ENCODE measurements at regions of chr1 and their contacts with region 1.

Region 1: DNA sequence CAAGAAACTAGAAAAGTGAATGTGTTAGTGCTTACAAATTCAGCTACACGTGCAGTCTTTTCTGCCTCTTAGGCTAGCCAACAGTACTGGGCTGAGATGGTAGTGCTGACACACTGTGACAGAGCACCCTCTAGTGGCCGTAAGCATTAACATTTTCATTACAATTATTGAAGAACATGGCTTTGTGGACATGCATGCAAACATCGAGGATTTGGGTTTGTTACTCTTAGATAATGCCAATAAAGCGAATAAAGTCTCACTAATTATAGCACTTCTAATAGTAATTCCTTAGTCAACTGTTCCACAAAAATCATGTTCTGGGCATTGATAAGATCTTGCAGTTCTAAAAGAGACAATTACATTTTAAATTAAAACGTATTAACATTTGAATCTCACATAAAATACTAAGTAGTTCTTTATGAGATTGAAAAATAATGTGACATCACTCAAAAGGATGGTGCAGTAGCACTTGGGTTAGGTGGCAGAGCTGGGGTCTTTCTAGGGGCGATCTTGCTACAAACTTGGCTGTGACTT is 47.1 kb downstream of the MYSM1 start:
- DNase-seq: peak; percentile 72
- ATAC-seq: peak; percentile 90
- H3K4me3 Mint-ChIP-seq: no peak overlapping the region
- H3K27ac Mint-ChIP-seq: no peak overlapping the region
- H3K4me1 Mint-ChIP-seq: peaks cover 21% of the 10 kb centered on the region
- H3K27me3 Mint-ChIP-seq: no peaks in the 10 kb centered on the region
- CTCF ChIP-seq: peak; percentile 83

Region 2: DNA sequence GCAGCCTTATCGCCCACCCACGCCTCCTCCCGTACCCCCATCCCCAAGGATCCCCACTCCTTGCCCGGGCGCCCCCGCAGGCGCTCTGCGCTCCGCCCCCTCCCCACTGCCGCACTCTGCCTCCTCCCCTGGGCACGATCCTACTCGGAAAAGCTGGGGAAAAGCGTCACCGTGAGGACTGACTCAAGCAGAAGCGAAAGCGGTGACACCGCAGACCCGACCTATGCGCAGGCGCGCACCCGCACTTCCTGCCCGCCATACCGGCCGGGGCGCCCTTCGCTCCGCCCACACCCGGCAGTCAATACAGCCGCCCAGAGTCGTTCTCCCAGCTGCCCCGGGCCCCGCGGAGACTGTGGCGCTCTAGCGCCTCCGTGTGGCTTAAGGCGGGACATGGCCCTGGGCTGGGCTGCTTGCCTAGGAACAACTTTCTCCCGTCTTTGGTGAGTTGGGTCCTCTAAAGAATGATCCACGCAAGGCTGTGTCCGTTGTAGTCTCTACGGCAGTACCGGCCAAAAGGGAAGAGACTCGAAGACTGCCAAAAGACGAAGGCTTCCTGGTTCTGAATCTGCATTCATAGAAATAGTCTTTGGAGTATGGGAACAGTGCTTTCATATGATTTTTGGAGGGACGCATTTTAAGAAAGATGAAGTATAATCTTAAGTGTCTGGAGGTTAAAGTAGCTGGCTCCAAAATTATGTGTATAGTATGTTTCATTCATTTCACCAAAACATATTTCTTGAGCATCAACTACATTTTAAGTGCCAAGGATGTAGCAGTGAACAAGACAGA is 106.0 kb before region 1 on chr1 and contains the start of gene OMA1:
- CTCF ChIA-PET with region 1: interaction called, 17 read pairs
- POLR2A ChIA-PET with region 1: no interaction called
- intact Hi-C with region 1: no loop called
- DNase-seq: peak; percentile 97
- ATAC-seq: peak; percentile 95
- H3K4me3 Mint-ChIP-seq: peak within 1 kb of the TSS; percentile 93
- H3K27ac Mint-ChIP-seq: peak within 1 kb of the TSS; percentile 95
- H3K4me1 Mint-ChIP-seq: peaks cover 18% of the 10 kb centered on the region
- H3K27me3 Mint-ChIP-seq: no peaks in the 10 kb centered on the region
- CTCF ChIP-seq: peak; percentile 78
- total RNA-seq, gene OMA1: 14.7 to 14.9 TPM

Region 3: DNA sequence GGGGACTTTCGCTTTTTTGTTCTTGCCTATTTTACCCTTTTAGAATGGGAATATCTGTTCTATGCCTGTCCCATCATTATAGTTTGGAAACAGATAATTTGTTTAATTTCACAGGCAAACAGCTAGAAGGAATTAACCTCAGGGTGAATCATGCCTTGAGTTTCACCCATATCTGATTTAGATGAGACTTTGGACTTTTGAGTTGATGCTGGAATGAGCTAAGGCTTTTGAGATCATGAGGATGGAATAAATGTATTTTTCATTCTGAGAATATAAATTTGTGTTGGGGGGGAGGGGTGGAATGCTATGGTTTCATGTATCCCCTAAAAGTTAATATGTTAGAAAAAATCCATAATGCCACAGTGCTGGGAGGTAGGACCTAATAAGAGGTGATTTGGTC is 19.6 kb before region 1 on chr1:
- CTCF ChIA-PET with region 1: no interaction called
- POLR2A ChIA-PET with region 1: no interaction called
- intact Hi-C with region 1: no loop called
- DNase-seq: no peak
- ATAC-seq: no peak
- H3K4me3 Mint-ChIP-seq: no peak overlapping the region
- H3K27ac Mint-ChIP-seq: no peak overlapping the region
- H3K4me1 Mint-ChIP-seq: no peaks in the 10 kb centered on the region
- H3K27me3 Mint-ChIP-seq: peaks cover 5% of the 10 kb centered on the region
- CTCF ChIP-seq: no peak

Region 4: GRCh38 chr1:58664881-58665280 is 12.2 kb after region 1 on chr1:
- CTCF ChIA-PET with region 1: interaction called, 43 read pairs
- POLR2A ChIA-PET with region 1: no interaction called
- intact Hi-C with region 1: no loop called
- DNase-seq: no peak
- ATAC-seq: no peak
- H3K4me3 Mint-ChIP-seq: no peak overlapping the region
- H3K27ac Mint-ChIP-seq: no peak overlapping the region
- H3K4me1 Mint-ChIP-seq: no peaks in the 10 kb centered on the region
- H3K27me3 Mint-ChIP-seq: no peaks in the 10 kb centered on the region
- CTCF ChIP-seq: no peak

Region 5: GRCh38 chr1:58683519-58683918 is 30.8 kb after region 1 on chr1:
- CTCF ChIA-PET with region 1: interaction called, 11 read pairs
- POLR2A ChIA-PET with region 1: no interaction called
- intact Hi-C with region 1: no loop called
- DNase-seq: no peak
- ATAC-seq: no peak
- H3K4me3 Mint-ChIP-seq: no peak overlapping the region
- H3K27ac Mint-ChIP-seq: no peak overlapping the region
- H3K4me1 Mint-ChIP-seq: peaks cover 31% of the 10 kb centered on the region
- H3K27me3 Mint-ChIP-seq: no peaks in the 10 kb centered on the region
- CTCF ChIP-seq: no peak

Region 6: DNA sequence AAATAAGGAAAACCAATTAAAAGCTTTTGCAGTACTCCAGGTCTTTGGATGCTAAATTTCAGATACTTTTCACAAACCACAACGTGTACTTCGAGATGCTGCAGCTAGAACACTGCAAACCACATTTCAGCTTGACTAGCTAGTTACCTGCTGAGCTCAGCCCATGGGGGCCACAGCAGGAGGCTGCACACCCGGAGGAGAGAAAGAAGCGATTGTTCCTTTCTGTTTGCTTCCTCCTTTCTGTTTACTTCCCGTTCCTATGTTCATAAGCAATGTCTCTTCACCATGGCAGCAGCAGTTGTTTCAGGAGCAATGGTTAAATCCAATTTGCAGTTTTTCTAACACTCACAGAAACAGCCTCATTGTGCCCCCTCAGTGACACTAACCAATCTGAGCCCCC is 418.6 kb after region 1 on chr1:
- CTCF ChIA-PET with region 1: no interaction called
- POLR2A ChIA-PET with region 1: no interaction called
- intact Hi-C with region 1: no loop called
- DNase-seq: peak; percentile 22
- ATAC-seq: peak; percentile 55
- H3K4me3 Mint-ChIP-seq: peak overlapping the region; percentile 39
- H3K27ac Mint-ChIP-seq: peak overlapping the region; percentile 89
- H3K4me1 Mint-ChIP-seq: peaks cover 25% of the 10 kb centered on the region
- H3K27me3 Mint-ChIP-seq: no peaks in the 10 kb centered on the region
- CTCF ChIP-seq: no peak